ENCODE measurements at regions of chr3 and their contacts with region 1.

Region 1: DNA sequence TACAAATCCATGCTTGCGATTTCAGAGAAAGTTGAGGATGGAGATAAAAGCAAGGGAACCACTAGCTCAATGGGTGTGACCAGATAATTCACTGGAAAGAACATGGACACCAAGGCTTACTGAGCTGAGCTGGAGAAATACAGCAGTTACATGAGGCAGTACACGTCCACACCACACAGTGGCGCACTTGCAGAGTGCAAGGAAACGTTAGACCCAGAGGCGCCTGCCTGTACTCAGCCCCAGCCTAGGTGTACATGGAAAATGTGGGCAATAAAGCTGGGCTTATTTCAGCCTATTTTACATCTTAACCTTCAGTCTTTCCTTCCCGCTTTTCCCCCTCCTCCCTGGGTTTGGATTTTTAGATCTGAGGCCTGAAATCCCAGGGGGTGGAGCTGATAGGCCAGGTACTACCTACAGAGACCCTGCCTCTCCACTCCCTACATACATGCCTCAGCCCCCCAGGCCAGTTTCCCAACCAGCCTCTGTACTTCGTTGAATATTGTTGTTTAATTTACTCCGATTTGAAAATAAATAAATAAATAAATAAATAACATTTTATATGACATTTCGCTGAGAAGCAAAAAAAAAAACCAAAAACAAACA is 60.1 kb downstream of the PCOLCE2 start:
- DNase-seq: peak; percentile 83 to 89 (median 86)
- ATAC-seq: peak; percentile 98
- H3K4me3 ChIP-seq: no peak overlapping the region
- H3K27ac ChIP-seq: no peak overlapping the region
- H3K4me1 ChIP-seq: no peaks in the 10 kb centered on the region
- H3K27me3 ChIP-seq: no peaks in the 10 kb centered on the region
- CTCF ChIP-seq: peak; percentile 70 to 91 (median 83)
- POLR2A ChIP-seq: no peak

Region 2: DNA sequence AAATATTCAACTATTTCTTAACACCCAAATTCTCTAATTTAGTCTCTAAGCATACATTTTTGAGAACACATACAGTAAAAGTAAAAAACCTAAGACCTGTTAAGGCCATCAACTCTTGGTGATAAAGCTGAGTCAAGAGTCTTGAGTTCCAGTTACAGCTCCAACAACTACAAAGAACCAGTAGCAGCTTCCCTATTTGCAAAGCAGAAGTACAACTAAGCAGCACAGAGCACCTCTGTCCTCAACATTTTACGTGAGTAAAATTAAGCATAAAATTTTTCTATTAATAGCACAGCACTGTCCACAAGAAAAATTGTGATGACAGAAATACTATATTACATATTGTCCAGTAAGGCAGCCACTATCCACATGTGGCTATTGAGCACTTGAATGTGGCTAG is 55.7 kb after region 1 on chr3:
- intact Hi-C with region 1: no loop called
- DNase-seq: no peak
- ATAC-seq: no peak
- H3K4me3 ChIP-seq: no peak overlapping the region
- H3K27ac ChIP-seq: no peak overlapping the region
- H3K4me1 ChIP-seq: peaks cover 16% of the 10 kb centered on the region
- H3K27me3 ChIP-seq: peaks cover 0 to 14% of the 10 kb centered on the region in 2 donors
- CTCF ChIP-seq: no peak
- POLR2A ChIP-seq: no peak

Region 3: DNA sequence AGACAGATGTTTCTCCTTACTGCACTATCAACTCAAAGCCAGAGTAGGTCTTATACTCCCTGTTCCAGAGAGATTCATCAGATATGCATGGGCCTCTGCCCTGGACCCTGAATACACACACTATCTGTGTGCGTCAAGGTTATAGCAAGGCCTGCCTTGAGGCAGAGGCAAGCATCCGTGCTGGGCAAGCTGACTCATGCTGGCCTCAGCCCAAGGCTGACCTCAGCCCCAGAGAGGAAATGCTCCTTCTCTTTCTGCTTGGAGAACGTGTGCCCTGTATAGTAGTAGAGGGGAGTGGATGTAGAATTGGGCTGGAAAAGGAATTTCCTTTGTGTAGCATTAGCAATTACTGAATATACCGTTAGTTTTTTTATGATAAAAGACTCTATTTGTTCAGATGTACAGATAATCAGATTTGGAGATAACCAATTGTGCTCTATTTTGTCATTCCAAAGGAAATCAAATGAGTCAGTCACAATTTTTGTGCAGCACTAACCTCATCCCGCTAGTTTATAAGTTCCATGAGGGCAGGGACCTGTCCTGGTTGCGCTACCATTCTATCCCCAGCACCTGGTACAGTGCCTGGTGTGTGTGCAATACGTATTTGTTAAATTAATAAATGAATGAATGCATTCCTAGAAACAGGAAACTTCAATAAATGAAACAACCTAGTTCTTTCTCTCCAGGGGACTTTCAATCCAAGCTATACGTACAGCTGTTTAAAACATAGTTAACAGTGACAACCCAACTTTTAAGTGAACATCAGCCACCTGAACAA is 148.0 kb after region 1 on chr3:
- intact Hi-C with region 1: loop called (anchors 10 kb)
- DNase-seq: peak; percentile 77 to 83 (median 80)
- ATAC-seq: peak; percentile 99
- H3K4me3 ChIP-seq: no peak overlapping the region
- H3K27ac ChIP-seq: no peak overlapping the region
- H3K4me1 ChIP-seq: no peaks in the 10 kb centered on the region
- H3K27me3 ChIP-seq: no peaks in the 10 kb centered on the region
- CTCF ChIP-seq: no peak
- POLR2A ChIP-seq: no peak

Region 4: GRCh38 chr3:142993958-142994442 is 165.2 kb after region 1 on chr3:
- intact Hi-C with region 1: loop called (anchors 5 kb)
- DNase-seq: peak; percentile 53 to 71 (median 64)
- ATAC-seq: peak; percentile 50
- H3K4me3 ChIP-seq: no peak overlapping the region
- H3K27ac ChIP-seq: no peak overlapping the region
- H3K4me1 ChIP-seq: no peaks in the 10 kb centered on the region
- H3K27me3 ChIP-seq: no peaks in the 10 kb centered on the region
- CTCF ChIP-seq: peak in 6 of 7 experiments; percentile 44 to 63 (median 62)
- POLR2A ChIP-seq: no peak

Measured in body of pancreas (tissue), 4 donors.